MCF 10A (cell line): ENCODE measurements at regions of chr16 and their contacts with region 1.

Region 1: DNA sequence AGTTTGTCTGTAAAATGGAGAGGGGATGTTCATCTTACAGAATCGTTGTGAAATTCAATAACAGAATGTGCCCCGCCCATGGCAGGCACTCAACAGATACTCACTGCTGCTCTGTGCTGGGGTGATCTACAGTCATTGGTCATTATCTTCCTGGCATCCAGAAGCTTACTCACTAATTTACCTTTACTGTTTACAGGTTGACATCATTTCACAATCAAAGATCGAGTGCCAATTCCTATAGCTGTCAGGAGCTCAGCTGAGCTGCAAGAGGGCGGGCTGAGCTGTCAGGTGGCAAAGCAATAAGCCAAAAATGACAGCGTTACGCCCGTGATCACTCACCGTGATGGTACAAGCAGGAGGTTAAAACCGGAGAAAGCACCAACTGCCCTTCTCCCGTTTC is 51.2 kb downstream of the LITAF start:
- DNase-seq: peak; percentile 91
- H3K4me3 Mint-ChIP-seq: no peak overlapping the region
- H3K27ac Mint-ChIP-seq: no peak overlapping the region
- H3K4me1 Mint-ChIP-seq: peaks cover 17% of the 10 kb centered on the region
- H3K27me3 Mint-ChIP-seq: no peaks in the 10 kb centered on the region
- CTCF ChIP-seq: no peak

Region 2: DNA sequence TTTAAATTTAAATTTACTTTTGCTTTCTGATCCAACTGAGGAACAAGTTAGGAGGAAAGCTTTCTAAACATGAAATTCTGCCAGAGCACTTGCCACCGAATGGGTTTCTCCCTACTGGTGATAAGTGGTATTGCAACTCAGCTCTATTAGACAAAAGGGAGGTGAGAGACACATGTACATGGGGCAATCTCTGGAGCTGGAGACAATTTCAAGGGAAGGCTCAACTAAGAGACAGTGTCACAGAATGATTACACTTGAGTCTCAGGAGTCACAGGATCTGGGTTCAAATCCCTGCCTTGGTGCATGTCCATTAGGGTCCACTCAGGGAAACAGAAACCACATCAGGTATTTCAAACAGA is 316.9 kb before region 1 on chr16:
- CTCF ChIA-PET with region 1: no interaction called
- POLR2A ChIA-PET with region 1: no interaction called
- intact Hi-C with region 1: no loop called
- DNase-seq: no peak
- H3K4me3 Mint-ChIP-seq: no peak overlapping the region
- H3K27ac Mint-ChIP-seq: no peak overlapping the region
- H3K4me1 Mint-ChIP-seq: no peaks in the 10 kb centered on the region
- H3K27me3 Mint-ChIP-seq: no peaks in the 10 kb centered on the region
- CTCF ChIP-seq: peak; percentile 49

Region 3: GRCh38 chr16:11396241-11397048 is 139.0 kb before region 1 on chr16:
- CTCF ChIA-PET with region 1: interaction called, 14 read pairs
- POLR2A ChIA-PET with region 1: no interaction called
- intact Hi-C with region 1: no loop called
- DNase-seq: peak; percentile 63
- H3K4me3 Mint-ChIP-seq: no peak overlapping the region
- H3K27ac Mint-ChIP-seq: no peak overlapping the region
- H3K4me1 Mint-ChIP-seq: no peaks in the 10 kb centered on the region
- H3K27me3 Mint-ChIP-seq: no peaks in the 10 kb centered on the region
- CTCF ChIP-seq: peak; percentile 99

Region 4: DNA sequence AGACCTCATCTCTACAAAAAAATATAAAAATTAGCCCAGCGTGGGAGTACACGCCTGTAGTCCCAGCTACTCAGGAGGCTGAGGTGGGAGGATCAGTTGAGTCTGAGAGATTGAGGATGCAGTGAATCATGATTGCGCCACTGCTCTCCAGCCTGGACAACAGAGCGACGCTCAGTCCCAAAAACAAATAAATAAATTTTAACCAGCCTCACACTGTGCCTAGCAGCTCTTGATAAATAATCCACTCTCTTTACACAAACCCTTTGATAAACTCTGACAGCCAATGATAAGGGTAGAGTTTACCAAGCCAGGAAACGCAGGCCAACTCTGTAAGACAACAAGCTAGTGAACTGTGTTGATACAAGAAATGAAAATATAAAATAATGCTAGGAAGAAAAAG is 18.6 kb after region 1 on chr16:
- CTCF ChIA-PET with region 1: interaction called, 4 read pairs
- POLR2A ChIA-PET with region 1: interaction called, 11 read pairs
- intact Hi-C with region 1: no loop called
- DNase-seq: peak; percentile 8
- H3K4me3 Mint-ChIP-seq: no peak overlapping the region
- H3K27ac Mint-ChIP-seq: no peak overlapping the region
- H3K4me1 Mint-ChIP-seq: no peaks in the 10 kb centered on the region
- H3K27me3 Mint-ChIP-seq: no peaks in the 10 kb centered on the region
- CTCF ChIP-seq: no peak

Region 5: GRCh38 chr16:11632464-11632939 is 97.0 kb after region 1 on chr16:
- CTCF ChIA-PET with region 1: interaction called, 3 read pairs
- POLR2A ChIA-PET with region 1: interaction called, 24 read pairs
- intact Hi-C with region 1: no loop called
- DNase-seq: no peak
- H3K4me3 Mint-ChIP-seq: no peak overlapping the region
- H3K27ac Mint-ChIP-seq: no peak overlapping the region
- H3K4me1 Mint-ChIP-seq: peaks cover 20% of the 10 kb centered on the region
- H3K27me3 Mint-ChIP-seq: no peaks in the 10 kb centered on the region
- CTCF ChIP-seq: no peak

Region 6: DNA sequence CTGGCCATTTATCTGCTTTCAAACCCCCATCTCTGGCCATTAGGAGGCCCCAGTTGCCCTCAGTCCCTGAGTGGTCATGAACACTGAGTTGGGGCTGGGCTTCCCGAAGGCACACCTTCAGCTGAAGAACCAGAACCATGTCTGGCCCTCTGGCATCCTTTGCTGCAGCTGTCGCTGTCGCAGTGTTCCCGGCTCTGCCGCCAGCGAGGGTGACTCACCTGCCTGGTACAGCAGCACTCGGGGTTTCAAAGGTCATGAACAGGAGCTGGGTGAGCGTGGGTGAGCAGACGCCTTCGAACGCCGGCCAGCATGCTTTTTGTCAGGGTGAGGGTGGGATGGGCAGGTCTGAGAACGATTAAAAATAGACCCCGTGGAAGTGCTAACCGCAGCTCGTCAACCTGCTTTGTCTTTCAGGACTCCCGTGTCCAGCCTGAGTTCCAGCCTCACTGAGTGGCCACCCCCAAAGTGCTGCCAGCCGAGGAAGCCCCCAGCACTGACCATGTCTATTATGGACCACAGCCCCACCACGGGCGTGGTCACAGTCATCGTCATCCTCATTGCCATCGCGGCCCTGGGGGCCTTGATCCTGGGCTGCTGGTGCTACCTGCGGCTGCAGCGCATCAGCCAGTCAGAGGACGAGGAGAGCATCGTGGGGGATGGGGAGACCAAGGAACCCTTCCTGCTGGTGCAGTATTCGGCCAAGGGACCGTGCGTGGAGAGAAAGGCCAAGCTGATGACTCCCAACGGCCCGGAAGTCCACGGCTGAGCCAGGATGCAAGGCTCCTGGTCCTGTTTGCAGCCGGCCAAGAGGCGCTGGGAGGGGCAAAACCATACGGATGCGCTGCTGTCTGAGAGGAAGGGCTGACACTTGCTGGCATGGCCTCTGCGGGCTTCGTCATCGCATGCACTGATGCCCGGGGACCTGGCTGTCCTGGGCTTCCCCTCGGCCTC is 140.4 kb after region 1 on chr16:
- CTCF ChIA-PET with region 1: interaction called, 6 read pairs
- POLR2A ChIA-PET with region 1: interaction called, 10 read pairs
- intact Hi-C with region 1: no loop called
- DNase-seq: peak; percentile 80
- H3K4me3 Mint-ChIP-seq: no peak overlapping the region
- H3K27ac Mint-ChIP-seq: no peak overlapping the region
- H3K4me1 Mint-ChIP-seq: peaks cover 28% of the 10 kb centered on the region
- H3K27me3 Mint-ChIP-seq: no peaks in the 10 kb centered on the region
- CTCF ChIP-seq: no peak